Right ventricle myocardium inferior (tissue), 1 donor: ENCODE measurements at regions of chr9 and their contacts with region 1.

Region 1: GRCh38 chr9:101119206-101119819 is 90.8 kb downstream of the PLPPR1 start:
- DNase-seq: peak; percentile 30
- ATAC-seq: no peak

Region 2: GRCh38 chr9:100869321-100869720 is 250.0 kb before region 1 on chr9:
- intact Hi-C with region 1: no loop called
- DNase-seq: no peak
- ATAC-seq: no peak

Region 3: GRCh38 chr9:101139082-101139481 is 19.8 kb after region 1 on chr9:
- intact Hi-C with region 1: no loop called
- DNase-seq: no peak
- ATAC-seq: no peak

Region 4: DNA sequence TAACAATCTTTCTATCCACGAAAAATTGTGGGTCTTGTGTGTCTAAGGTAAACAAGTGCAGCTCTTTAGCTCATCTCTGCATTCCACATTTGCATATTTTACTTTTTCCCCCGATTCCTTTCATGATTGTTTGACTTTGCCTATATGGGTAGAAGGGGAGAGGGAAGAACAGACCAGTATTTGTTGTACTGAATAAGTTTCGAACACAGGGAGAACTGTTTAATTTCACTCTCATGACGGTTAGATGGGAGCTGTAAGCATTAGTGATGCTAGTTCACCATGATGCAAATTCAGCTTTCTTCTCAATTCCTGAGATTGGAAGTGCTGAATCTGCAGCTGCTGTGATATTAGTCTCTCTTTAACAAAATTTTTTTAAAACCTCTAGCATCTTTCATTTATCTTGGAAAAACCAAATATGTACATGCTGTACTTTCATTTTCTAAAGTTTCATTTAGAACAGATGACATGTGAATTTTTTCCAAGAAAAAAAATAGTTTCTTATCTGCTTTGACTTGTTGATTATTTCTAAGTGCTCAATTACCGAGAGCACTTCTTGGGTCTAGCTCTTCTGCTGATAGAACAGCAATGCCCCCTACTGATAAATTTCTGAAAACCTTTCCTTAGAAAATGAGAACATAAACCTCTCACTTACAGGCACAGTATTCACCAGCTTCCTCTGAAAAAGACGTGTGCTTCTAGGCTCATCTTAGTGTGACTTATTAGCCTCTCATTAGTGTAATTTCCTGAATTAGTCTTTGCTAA is 116.0 kb after region 1 on chr9:
- intact Hi-C with region 1: loop called (anchors 1 kb)
- DNase-seq: no peak
- ATAC-seq: no peak

Region 5: DNA sequence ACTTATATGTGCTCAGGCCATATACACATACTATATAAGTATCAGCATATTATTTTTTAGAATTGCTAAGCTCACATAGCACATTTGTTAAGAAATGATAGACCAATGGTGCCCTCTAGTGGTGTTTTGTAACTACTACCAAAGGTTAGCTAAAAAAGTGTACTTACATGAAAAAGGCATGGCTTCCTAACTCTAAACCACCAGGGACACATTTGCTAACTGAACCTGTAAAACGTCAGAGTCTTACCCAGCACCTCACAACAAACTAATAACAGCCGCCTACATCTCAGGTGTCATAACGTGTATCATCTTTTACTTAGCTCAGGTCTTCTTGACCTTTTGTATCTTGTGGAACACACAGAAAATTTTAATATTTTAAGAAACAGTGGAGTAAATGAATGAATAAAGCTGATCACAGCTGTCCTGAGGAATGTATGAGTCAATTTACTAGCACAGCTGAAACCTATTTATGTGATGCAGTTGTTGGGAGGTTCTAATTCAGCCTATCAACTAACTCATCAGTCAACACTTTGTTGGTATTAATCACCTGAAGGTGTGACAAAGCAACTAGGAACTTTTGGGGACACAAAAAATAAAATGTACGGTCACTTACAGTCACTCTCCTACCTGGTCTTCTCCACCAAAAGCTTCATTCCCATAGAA is 192.6 kb after region 1 on chr9:
- intact Hi-C with region 1: loop called (anchors 5 kb)
- DNase-seq: no peak
- ATAC-seq: no peak

Region 6: DNA sequence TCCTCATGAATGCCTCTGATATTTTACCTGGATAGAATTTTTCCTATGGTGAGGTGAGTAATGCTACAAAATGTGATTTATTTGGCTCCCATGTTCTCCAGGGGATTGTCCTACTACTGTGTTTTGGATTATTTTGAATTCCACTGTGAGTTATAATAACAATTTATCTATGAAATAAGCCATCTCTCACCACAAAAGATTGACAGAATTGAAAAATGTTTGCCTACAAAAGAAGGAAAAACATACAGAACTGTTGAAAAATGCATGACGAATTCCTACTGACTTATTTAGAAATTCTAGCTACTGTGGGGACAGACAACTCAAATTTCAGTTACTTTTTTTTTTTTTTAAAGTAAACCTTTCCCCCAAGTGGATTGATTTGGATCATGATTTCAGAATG is 1082.8 kb after region 1 on chr9:
- intact Hi-C with region 1: no loop called
- DNase-seq: no peak
- ATAC-seq: no peak